ENCODE measurements at regions of chr16 and their contacts with region 1.

Region 1: DNA sequence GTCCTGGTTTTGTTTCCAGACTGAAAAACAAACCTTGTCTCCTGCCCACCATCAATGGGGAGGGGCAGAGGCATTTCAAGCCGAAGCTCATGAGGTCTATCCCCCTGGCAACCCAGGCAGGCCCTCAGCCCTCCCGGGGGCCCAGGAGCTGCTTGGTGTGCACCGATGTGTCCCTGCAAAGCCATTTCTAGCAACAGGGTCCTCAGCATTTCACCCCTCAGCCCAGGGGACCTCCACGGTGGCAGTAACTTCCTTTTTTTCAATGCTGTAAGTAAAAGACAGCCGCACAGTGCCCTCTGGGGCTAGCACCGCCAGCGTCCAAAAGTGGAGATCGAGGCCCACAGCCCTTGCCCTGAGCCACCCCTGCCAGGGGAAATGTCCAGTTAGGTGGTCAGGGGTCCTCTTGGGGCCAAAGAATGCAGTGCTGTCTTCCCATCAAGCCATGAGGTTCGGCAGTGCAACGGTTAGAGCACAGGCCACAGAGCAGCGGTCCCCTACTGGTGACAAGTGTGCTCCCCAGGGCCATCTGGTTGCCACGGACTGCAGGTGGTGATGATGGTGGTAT is 79.9 kb downstream of the LITAF start:
- DNase-seq: peak; percentile 48
- ATAC-seq: peak; percentile 87
- H3K4me3 Mint-ChIP-seq: peak overlapping the region; percentile 76
- H3K27ac Mint-ChIP-seq: peak overlapping the region; percentile 74
- H3K4me1 Mint-ChIP-seq: peaks cover 13% of the 10 kb centered on the region
- H3K27me3 Mint-ChIP-seq: no peaks in the 10 kb centered on the region
- CTCF ChIP-seq: no peak

Region 2: GRCh38 chr16:11481987-11482386 is 24.8 kb before region 1 on chr16:
- CTCF ChIA-PET with region 1: no interaction called
- POLR2A ChIA-PET with region 1: no interaction called
- intact Hi-C with region 1: no loop called
- DNase-seq: no peak
- ATAC-seq: no peak
- H3K4me3 Mint-ChIP-seq: no peak overlapping the region
- H3K27ac Mint-ChIP-seq: no peak overlapping the region
- H3K4me1 Mint-ChIP-seq: no peaks in the 10 kb centered on the region
- H3K27me3 Mint-ChIP-seq: no peaks in the 10 kb centered on the region
- CTCF ChIP-seq: no peak

Region 3: GRCh38 chr16:11520442-11520841 is 13.6 kb after region 1 on chr16:
- CTCF ChIA-PET with region 1: no interaction called
- POLR2A ChIA-PET with region 1: interaction called, 17 read pairs
- intact Hi-C with region 1: no loop called
- DNase-seq: no peak
- ATAC-seq: peak; percentile 84
- H3K4me3 Mint-ChIP-seq: no peak overlapping the region
- H3K27ac Mint-ChIP-seq: no peak overlapping the region
- H3K4me1 Mint-ChIP-seq: peaks cover 12% of the 10 kb centered on the region
- H3K27me3 Mint-ChIP-seq: no peaks in the 10 kb centered on the region
- CTCF ChIP-seq: no peak

Region 4: GRCh38 chr16:11560701-11561449 is 54.1 kb after region 1 on chr16:
- CTCF ChIA-PET with region 1: no interaction called
- POLR2A ChIA-PET with region 1: no interaction called
- intact Hi-C with region 1: no loop called
- DNase-seq: no peak
- ATAC-seq: peak; percentile 31
- H3K4me3 Mint-ChIP-seq: no peak overlapping the region
- H3K27ac Mint-ChIP-seq: peak overlapping the region; percentile 54
- H3K4me1 Mint-ChIP-seq: peaks cover 36% of the 10 kb centered on the region
- H3K27me3 Mint-ChIP-seq: no peaks in the 10 kb centered on the region
- CTCF ChIP-seq: no peak